ENCODE measurements at regions of chr17 and their contacts with region 1.

Region 1: DNA sequence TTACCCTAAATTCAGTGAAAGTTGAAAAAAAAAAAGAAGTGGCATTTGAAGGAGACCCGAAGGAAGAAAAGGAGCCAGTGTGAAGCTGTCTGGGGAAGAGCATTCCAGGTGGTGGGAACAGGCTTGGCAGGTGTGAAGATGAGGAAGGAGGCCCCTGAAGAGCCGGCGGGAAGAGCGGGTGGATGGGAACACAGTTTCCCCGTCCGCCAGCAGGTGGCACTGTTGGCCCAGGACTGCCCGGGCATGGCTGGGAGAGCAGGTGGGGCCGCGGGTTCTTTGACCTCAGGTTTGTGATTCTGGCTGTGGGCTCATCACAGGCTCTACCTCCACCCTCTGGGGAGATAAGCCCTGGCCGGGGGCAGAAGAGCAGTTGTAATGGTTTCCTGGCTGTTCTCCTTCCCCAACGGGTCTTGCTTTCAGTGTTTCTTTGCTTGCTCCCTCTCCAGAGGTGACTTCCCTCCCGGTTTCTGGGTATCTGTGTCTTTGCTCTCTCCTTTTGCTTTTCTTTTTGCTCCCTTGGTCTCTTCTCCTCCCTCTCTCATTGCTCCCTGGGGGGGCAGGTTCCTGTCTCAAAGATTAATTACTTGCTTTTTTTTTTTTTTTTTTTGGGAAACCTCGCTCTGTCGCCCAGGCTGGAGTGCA is 32.3 kb downstream of the RAP1GAP2 start:
- DNase-seq: peak; percentile 42 to 60 (median 59)
- H3K4me3 ChIP-seq: no peak overlapping the region
- H3K4me3 Mint-ChIP-seq: no peak overlapping the region
- H3K27ac ChIP-seq: no peak overlapping the region
- H3K27ac Mint-ChIP-seq: peak overlapping the region in 3 of 7 donors; percentile 44 to 66 (median 47)
- H3K4me1 ChIP-seq: peaks cover 13 to 28% of the 10 kb centered on the region in 2 donors
- H3K4me1 Mint-ChIP-seq: peaks cover 36% of the 10 kb centered on the region
- H3K27me3 ChIP-seq: no peaks in the 10 kb centered on the region
- H3K27me3 Mint-ChIP-seq: peaks cover 0 to under 1% (median 0%) of the 10 kb centered on the region in 3 donors
- CTCF ChIP-seq: peak; percentile 90

Region 2: GRCh38 chr17:2929881-2930533 is 101.5 kb after region 1 on chr17:
- intact Hi-C with region 1: loop called (anchors 5 kb)
- DNase-seq: no peak
- H3K4me3 ChIP-seq: no peak overlapping the region
- H3K4me3 Mint-ChIP-seq: no peak overlapping the region
- H3K27ac ChIP-seq: no peak overlapping the region
- H3K27ac Mint-ChIP-seq: peak overlapping the region in 1 of 7 donors; percentile 30
- H3K4me1 ChIP-seq: peaks cover 0 to 4% of the 10 kb centered on the region in 2 donors
- H3K4me1 Mint-ChIP-seq: peaks cover 30% of the 10 kb centered on the region
- H3K27me3 ChIP-seq: no peaks in the 10 kb centered on the region
- H3K27me3 Mint-ChIP-seq: peaks cover under 1 to 3% (median 2%) of the 10 kb centered on the region in 3 donors
- CTCF ChIP-seq: peak; percentile 78

Region 3: DNA sequence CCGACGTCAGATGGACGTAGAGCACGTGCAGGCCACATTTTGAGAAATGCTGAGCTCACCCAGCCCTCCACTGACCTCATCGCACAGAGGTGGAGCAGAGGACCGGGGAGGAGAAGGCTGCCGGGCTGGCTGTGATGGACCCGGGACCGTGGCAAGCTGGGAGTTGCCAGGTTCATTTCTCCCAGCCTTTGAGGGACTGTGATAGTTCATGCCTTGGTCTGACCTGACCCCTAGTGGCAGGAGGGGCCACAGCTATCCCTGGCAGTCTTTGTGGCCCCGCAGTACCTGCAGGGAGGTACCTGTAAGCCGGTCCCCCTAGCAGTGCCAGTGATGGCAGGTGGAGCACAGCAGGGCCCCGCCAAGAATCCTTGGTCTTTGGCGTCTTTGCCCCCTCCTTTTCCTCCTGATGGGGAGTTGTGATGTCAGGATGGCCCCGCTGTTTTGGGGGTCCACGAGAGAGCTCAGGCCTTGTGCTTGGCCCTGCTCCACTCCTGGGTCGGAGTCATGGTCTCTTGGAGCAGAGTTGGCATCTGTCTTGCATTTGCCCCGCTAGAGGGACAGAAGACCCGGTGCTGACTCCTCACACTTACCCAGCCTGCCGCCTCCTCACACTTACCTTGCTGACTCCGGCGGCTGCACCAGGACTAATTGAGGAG is 184.5 kb after region 1 on chr17:
- intact Hi-C with region 1: loop called (anchors 1 to 5 kb)
- DNase-seq: peak in 2 of 3 donors; percentile 32 to 33
- H3K4me3 ChIP-seq: no peak overlapping the region
- H3K4me3 Mint-ChIP-seq: no peak overlapping the region
- H3K27ac ChIP-seq: peak overlapping the region in 1 of 2 donors; percentile 20
- H3K27ac Mint-ChIP-seq: peak overlapping the region in 2 of 7 donors; percentile 4 to 47
- H3K4me1 ChIP-seq: no peaks in the 10 kb centered on the region
- H3K4me1 Mint-ChIP-seq: no peaks in the 10 kb centered on the region
- H3K27me3 ChIP-seq: no peaks in the 10 kb centered on the region
- H3K27me3 Mint-ChIP-seq: no peaks in the 10 kb centered on the region
- CTCF ChIP-seq: peak; percentile 76